Cardiac septum (tissue), 1 donor: ENCODE measurements at regions of chr21 and their contacts with region 1.

Region 1: GRCh38 chr21:37166733-37167132 is 93.7 kb downstream of the TTC3 start:
- DNase-seq: no peak

Region 2: DNA sequence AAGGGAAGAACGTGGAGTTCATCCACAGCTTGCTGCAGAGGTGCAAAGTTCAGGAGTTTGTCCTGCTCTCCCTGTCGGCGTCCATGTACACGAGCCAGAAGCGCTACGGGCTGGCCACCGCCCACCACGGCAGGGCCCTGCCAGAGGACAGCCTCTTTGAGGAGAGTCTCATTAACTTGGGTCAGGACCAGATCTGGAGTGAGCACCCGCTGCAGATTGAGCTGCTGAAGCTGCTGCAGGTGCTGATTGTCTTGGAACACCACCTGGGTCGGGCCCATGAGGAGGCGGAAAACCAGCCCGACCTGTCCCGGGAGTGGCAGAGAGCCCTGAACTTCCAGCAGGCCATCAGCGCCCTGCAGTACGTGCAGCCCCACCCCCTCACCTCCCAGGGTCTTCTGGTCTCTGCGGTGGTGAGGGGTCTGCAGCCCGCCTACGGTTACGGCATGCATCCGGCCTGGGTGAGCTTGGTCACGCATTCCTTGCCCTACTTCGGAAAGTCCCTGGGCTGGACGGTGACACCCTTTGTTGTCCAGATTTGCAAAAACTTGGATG is 920.6 kb before region 1 on chr21:
- intact Hi-C with region 1: no loop called
- DNase-seq: no peak

Region 3: GRCh38 chr21:37139902-37140301 is 26.8 kb before region 1 on chr21:
- intact Hi-C with region 1: no loop called
- DNase-seq: no peak

Region 4: DNA sequence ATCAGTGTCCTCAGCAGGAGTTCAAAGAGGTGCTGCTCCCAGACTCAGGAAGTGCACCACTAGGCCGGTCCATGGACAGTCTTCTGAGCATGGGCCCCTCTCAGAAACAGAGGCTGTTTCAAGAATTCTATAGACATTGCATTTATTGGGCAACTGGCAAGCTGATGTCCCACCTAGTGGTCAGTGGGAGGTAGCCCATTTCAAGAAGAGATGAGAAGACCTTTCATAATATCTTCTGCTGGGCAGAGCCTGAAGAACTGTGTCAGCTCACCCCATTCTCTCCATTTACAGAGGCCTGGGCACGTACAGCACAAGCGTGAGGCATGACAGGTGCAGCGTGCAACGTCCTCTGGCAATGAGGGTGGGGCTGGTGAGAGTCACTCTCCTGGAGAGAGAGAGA is 415.9 kb after region 1 on chr21:
- intact Hi-C with region 1: loop called (anchors 10 kb)
- DNase-seq: no peak